Activated CD8-positive, alpha-beta T cell treated with anti-CD3 and anti-CD28 coated beads for 36 hours (primary cell): ENCODE measurements at regions of chr18 and their contacts with region 1.

Region 1: GRCh38 chr18:34122724-34123334 is 101.9 kb downstream of the NOL4 start:
- DNase-seq: peak; percentile 26
- ATAC-seq: peak; percentile 60
- H3K4me3 Mint-ChIP-seq: no peak overlapping the region
- H3K27ac Mint-ChIP-seq: no peak overlapping the region
- H3K4me1 Mint-ChIP-seq: no peaks in the 10 kb centered on the region
- H3K27me3 Mint-ChIP-seq: no peaks in the 10 kb centered on the region
- CTCF ChIP-seq: peak; percentile 89

Region 2: GRCh38 chr18:34322365-34323289 is 199.8 kb after region 1 on chr18:
- CTCF ChIA-PET with region 1: interaction called, 15 read pairs
- POLR2A ChIA-PET with region 1: no interaction called
- intact Hi-C with region 1: no loop called
- DNase-seq: peak; percentile 56
- ATAC-seq: no peak
- H3K4me3 Mint-ChIP-seq: no peak overlapping the region
- H3K27ac Mint-ChIP-seq: no peak overlapping the region
- H3K4me1 Mint-ChIP-seq: no peaks in the 10 kb centered on the region
- H3K27me3 Mint-ChIP-seq: no peaks in the 10 kb centered on the region
- CTCF ChIP-seq: peak; percentile 37